GM10248 (cell line): ENCODE measurements at regions of chr16 and their contacts with region 1.

Region 1: GRCh38 chr16:24800586-24800985 is 45.2 kb upstream of the SLC5A11 start:
- DNase-seq: no peak
- CTCF ChIP-seq: peak; percentile 33

Region 2: GRCh38 chr16:24626256-24626655 is 174.3 kb before region 1 on chr16:
- CTCF ChIA-PET with region 1: no interaction called
- POLR2A ChIA-PET with region 1: interaction called, 10 read pairs
- DNase-seq: no peak
- CTCF ChIP-seq: no peak

Region 3: GRCh38 chr16:24737391-24737871 is 63.2 kb before region 1 on chr16:
- CTCF ChIA-PET with region 1: no interaction called
- POLR2A ChIA-PET with region 1: no interaction called
- DNase-seq: no peak
- CTCF ChIP-seq: no peak

Region 4: DNA sequence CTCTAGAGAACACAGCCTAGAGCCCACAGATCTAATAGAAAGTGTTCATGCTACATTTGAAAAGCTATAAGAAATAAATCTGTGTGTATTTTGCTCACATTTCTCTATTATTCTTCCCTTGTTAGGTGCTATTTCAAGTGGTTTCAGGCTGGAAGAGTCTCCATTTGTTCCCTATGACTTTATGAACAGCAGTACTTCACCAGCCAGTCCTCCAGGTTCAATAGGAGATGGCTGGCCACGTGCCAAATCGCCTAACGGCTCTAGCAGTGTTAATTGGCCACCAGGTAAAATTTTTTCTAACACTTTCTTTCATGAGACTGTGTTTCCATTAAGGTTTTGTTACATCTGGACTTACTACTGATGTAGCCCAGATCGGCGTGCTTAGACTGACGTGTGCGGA is 14.4 kb after region 1 on chr16:
- CTCF ChIA-PET with region 1: interaction called, 10 read pairs
- POLR2A ChIA-PET with region 1: no interaction called
- DNase-seq: no peak
- CTCF ChIP-seq: no peak

Region 5: DNA sequence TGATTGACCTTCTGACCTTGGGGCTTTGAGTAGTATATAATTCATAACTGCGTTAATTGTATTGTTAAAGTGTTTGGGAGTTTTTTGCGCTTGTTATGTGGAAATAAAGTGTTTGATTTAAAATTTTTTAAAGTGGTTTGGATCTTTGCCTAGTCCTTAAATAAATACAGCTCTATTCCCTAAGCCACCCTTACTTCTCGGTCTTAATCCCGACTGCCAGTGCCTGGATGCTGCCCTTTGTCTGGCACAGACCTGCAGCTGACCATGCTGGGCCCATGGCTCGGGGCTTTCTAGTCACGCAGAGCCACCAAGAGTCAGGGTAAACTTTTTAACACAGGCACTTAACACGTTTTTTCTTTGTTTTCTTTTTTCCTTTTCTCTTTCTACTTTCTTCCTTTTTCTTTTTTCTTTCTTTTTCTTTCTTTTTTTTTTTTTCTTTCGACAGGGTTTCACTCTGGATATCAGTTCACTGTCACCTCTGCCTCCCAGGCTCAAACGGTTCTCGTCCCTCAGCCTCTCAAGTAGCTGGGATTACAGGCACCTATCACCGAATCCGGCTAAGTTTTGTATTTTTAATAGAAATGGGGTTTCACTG is 25.6 kb after region 1 on chr16:
- CTCF ChIA-PET with region 1: no interaction called
- POLR2A ChIA-PET with region 1: no interaction called
- DNase-seq: no peak
- CTCF ChIP-seq: no peak

Region 6: GRCh38 chr16:24841291-24841690 is 40.7 kb after region 1 on chr16:
- CTCF ChIA-PET with region 1: no interaction called
- POLR2A ChIA-PET with region 1: no interaction called
- DNase-seq: no peak
- CTCF ChIP-seq: no peak